ENCODE measurements at regions of chr19 and their contacts with region 1.

Region 1: GRCh38 chr19:47436712-47437401 is 17.5 kb upstream of the MEIS3 start:
- DNase-seq: peak; percentile 90
- ATAC-seq: peak; percentile 90
- H3K4me3 Mint-ChIP-seq: no peak overlapping the region
- H3K27ac Mint-ChIP-seq: peak overlapping the region; percentile 66
- H3K4me1 Mint-ChIP-seq: peaks cover 8% of the 10 kb centered on the region
- H3K27me3 Mint-ChIP-seq: peaks cover 15% of the 10 kb centered on the region
- CTCF ChIP-seq: peak; percentile 92

Region 2: DNA sequence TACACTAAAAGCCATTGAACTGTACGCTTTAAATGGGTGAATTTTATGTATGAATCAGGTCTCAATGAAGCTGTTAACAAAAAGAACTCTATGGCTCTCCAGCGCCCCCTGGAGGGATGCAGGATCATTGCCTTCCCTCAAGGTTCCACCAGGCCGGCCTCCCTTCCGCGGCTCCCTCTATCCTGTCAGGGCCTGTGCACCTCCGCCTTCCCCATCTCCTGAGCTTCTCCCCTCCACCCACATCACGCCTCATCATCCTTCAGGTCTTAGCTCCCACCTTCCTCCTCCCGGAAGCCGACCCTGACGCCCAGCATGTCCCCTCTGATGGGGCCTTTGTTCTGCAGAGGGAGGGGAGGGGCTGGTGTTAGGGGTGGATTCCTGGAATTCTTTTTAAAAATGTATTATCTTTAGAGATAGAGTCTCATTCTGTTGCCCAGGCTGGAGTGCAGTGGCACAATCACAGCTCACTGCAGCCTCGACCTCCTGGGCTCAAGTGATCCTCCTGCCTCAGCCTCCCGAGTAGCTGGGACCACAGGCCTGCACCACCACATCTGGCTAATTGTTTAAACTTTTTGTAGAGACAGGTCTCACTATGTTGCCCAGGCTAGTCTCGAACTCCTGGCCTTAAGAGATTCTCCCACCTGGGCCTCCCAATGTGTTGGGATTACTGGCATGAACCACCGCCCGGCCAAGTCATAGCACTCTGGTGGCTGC is 45.2 kb before region 1 on chr19:
- CTCF ChIA-PET with region 1: interaction called, 11 read pairs
- POLR2A ChIA-PET with region 1: no interaction called
- DNase-seq: peak; percentile 91
- ATAC-seq: peak; percentile 99
- H3K4me3 Mint-ChIP-seq: 0 out of 2 replicates have a peak overlapping the region, but pooled peaks have one; percentile 21
- H3K27ac Mint-ChIP-seq: peak overlapping the region; percentile 58
- H3K4me1 Mint-ChIP-seq: peaks cover 22% of the 10 kb centered on the region
- H3K27me3 Mint-ChIP-seq: peaks cover 14% of the 10 kb centered on the region
- CTCF ChIP-seq: peak; percentile 92

Region 3: DNA sequence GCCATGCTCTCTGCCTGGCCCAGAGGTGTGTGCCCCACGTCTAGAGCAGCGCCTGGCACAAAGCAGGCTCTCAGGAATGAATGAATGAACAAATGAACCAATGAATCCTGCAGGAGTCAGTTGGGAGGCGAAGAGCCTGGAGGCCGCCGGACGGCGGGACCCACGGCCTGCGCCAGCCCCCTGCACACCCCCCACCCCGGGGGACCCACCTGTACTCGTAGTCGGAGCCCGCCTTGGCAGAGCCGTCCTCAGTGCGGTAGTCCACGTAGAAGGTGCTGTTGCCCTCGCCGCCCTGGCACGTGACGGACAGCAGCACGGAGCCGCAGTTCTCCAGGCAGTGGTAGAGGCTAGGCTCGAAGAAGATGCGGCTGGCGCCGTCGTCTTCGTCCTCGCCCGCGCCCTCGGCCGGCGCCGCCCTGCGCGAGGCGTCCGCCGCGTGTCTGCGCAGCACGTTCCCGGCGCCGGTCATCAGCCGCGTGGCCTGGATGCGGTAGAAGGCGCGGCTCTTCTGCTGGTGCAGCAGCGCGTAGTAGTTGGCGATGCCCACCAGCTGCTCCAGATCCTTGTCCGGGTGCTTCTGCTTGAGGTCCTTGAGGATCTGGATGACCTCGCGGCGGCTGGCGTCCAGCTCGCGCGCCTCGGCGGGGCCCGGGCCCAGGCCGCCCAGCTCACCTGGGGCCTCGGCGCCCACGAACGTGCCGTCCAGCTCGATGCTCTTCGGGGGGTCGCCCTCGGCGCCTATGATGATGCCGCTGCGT is 20.0 kb after region 1 on chr19:
- CTCF ChIA-PET with region 1: interaction called, 15 read pairs
- POLR2A ChIA-PET with region 1: no interaction called
- DNase-seq: no peak
- ATAC-seq: no peak
- H3K4me3 Mint-ChIP-seq: no peak overlapping the region
- H3K27ac Mint-ChIP-seq: no peak overlapping the region
- H3K4me1 Mint-ChIP-seq: peaks cover 3% of the 10 kb centered on the region; the same call in 1 of the 2 replicates
- H3K27me3 Mint-ChIP-seq: peaks cover 21% of the 10 kb centered on the region
- CTCF ChIP-seq: no peak

Region 4: DNA sequence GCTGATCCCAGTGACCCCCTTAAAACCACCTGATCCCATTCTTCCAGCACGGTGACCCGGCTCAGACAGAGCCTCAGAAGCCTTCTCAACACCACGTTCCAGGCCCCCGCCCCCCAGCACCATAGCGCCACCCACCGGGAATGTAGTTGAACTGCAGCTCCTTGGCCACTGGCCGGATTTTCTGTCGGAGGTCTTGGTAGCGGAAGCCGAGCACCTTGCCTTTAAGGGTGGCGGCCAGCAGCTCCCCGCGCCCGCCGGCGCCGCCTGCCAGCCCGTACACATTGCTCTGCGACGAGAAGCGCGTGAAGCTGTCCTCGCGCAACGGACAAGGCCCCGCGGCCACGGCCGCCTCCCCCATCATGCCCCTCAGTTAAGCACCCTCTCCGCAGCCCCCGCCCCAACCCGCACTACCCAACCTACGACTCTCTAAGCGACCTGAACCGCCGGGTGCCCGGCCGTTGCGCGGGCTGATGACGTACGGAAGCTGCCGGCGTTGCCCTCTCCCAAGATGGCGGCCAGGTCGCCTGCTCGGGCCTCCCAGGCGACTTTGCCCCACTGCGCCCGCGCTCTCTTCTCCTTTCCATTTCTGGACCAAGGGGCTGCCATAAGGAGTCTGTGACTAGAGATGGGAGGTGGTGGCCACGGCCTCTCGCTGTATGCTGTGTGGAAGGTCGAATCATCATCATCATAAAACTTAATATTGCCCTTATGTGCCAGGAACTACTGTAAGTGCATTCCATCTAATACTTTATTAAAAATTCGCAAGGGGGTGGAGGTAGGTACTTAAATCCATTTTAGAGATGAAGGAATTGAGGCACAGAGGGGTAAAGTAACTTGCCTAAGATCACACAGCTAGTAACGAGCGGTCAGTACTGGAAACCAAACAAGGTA is 47.2 kb after region 1 on chr19 and contains the start of gene KPTN:
- CTCF ChIA-PET with region 1: interaction called, 94 read pairs
- POLR2A ChIA-PET with region 1: interaction called, 3 read pairs
- DNase-seq: peak; percentile 91
- ATAC-seq: peak; percentile 62
- H3K4me3 Mint-ChIP-seq: peak within 1 kb of the TSS; percentile 96
- H3K27ac Mint-ChIP-seq: peak within 1 kb of the TSS; percentile 98
- H3K4me1 Mint-ChIP-seq: peaks cover 18% of the 10 kb centered on the region
- H3K27me3 Mint-ChIP-seq: peaks cover 9% of the 10 kb centered on the region
- CTCF ChIP-seq: peak; percentile 96
- total RNA-seq, gene KPTN: 24.5 to 30.2 TPM (median 29.5 TPM) in 3 replicates

Region 5: GRCh38 chr19:47600246-47601179 is 163.7 kb after region 1 on chr19:
- CTCF ChIA-PET with region 1: interaction called, 14 read pairs
- POLR2A ChIA-PET with region 1: interaction called, 3 read pairs
- DNase-seq: peak; percentile 100
- ATAC-seq: peak; percentile 92
- H3K4me3 Mint-ChIP-seq: peak overlapping the region; percentile 86
- H3K27ac Mint-ChIP-seq: peak overlapping the region; percentile 98
- H3K4me1 Mint-ChIP-seq: peaks cover 27% of the 10 kb centered on the region
- H3K27me3 Mint-ChIP-seq: no peaks in the 10 kb centered on the region
- CTCF ChIP-seq: no peak

Region 6: GRCh38 chr19:47707135-47707925 is 270.5 kb after region 1 on chr19:
- CTCF ChIA-PET with region 1: interaction called, 70 read pairs
- POLR2A ChIA-PET with region 1: interaction called, 5 read pairs
- DNase-seq: peak; percentile 92
- ATAC-seq: peak; percentile 96
- H3K4me3 Mint-ChIP-seq: no peak overlapping the region; the same call in 1 of the 2 replicates
- H3K27ac Mint-ChIP-seq: no peak overlapping the region
- H3K4me1 Mint-ChIP-seq: 0 out of 2 replicates have a peak, but pooled peaks cover 2% of the 10 kb centered on the region
- H3K27me3 Mint-ChIP-seq: peaks cover 5% of the 10 kb centered on the region
- CTCF ChIP-seq: peak; percentile 71

Measured in WTC11 (cell line).